Aorta (tissue), 5 donors: ENCODE measurements at regions of chr2 and their contacts with region 1.

Region 1: DNA sequence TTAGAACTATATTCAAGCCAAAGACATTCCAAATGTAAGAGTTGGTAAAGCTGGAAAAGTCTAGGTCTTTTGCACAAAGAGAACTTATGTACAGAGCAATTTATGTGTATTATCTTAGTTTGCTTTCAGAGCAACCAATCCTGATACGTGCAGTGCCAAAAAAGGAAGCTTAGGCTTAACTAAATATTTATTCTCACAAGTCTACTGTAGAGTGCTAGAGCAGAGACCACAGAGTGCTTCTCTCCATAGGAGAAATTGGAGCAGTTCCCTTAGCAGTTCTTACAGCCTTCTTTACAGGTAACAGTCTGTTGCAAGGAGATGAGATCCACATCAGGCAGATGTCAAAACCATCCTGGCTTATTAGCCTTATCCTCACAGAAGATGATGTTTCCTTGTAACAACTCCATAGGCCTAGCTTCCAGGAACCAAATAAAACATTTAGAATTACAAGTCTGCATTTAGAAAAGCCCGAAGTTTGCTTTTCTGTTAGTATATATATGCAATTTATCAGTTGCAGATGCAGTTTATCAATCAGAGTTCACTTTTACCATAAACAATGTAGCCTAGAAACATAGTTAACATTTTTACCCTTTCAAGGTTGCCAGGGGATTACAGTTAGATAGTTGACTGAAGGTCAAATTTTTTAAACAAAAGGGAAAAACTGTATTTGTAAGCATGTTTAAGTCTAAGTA is 250.6 kb upstream of the KCNJ3 start:
- DNase-seq: no peak
- ATAC-seq: no peak
- H3K4me3 ChIP-seq: no peak overlapping the region
- H3K27ac ChIP-seq: no peak overlapping the region
- H3K4me1 ChIP-seq: no peaks in the 10 kb centered on the region
- H3K27me3 ChIP-seq: no peaks in the 10 kb centered on the region

Region 2: DNA sequence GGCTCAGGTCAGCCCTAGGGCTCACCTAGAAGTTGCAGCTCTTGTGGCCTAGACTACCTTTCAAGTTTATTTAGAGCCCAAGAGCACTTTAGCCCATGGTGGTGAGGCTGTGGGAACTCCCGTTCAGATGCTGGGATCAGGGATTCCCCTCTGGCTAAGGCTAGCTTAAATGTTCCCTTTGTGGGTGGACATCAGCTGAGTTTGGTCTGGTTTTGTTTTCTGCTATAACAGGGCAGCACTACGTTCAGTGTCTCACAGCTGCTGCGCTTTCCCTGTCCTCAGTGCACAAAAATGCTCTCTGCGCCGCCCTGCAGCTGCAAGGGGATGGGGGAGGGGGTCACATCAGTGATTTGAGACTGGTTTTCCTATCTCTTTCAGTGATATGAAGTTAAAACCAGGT is 80.1 kb after region 1 on chr2:
- intact Hi-C with region 1: no loop called
- DNase-seq: no peak
- ATAC-seq: no peak
- H3K4me3 ChIP-seq: no peak overlapping the region
- H3K27ac ChIP-seq: no peak overlapping the region
- H3K4me1 ChIP-seq: no peaks in the 10 kb centered on the region
- H3K27me3 ChIP-seq: no peaks in the 10 kb centered on the region

Region 3: GRCh38 chr2:155310589-155310988 is 862.7 kb after region 1 on chr2:
- intact Hi-C with region 1: loop called (anchors 10 kb)
- DNase-seq: no peak
- ATAC-seq: no peak
- H3K4me3 ChIP-seq: no peak overlapping the region
- H3K27ac ChIP-seq: no peak overlapping the region
- H3K4me1 ChIP-seq: no peaks in the 10 kb centered on the region
- H3K27me3 ChIP-seq: no peaks in the 10 kb centered on the region